ENCODE measurements at regions of chr5 and their contacts with region 1.

Region 1: GRCh38 chr5:174338185-174339010 is 292.9 kb downstream of the NSG2 start:
- DNase-seq: peak; percentile 66

Region 2: GRCh38 chr5:172496671-172497371 is 1841.6 kb before region 1 on chr5:
- CTCF ChIA-PET with region 1: no interaction called
- POLR2A ChIA-PET with region 1: no interaction called
- DNase-seq: no peak

Region 3: DNA sequence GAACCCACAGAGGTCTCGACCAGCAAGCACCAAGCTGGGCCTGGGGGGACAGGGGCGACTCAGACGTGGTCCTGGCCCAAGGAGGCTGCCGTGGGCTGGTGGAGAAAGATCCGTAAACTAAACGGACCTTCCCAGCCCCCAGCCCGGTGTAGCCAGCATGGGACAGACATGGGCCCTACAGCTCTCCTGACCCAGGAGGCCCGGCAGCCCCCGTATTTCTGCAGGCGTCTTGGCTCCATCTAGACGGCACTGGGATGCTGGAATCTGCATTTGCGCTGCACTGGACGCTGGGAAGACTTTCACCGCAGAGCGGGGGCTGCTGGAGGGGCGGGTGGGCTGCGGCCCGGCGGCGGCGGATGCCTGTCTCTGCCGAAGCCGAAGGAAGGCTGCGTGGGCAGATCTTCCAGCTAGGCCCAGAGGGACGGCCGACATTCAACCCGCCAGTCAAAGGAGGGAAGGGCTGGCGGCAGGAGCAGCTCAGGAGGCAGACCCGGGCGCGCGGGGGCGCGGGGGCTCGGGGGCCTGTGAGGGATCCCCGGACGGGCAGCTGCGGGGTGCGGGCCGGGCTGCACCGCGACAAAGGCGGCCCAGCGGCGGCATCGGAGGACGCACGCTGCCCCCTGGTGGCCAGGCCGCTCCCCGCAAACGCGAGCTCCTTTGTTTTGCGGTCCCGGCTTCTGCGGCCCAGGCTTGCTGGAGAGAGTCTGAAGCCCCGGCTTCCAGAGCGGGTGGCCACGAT is 26.7 kb before region 1 on chr5:
- CTCF ChIA-PET with region 1: no interaction called
- POLR2A ChIA-PET with region 1: no interaction called
- DNase-seq: peak; percentile 87

Region 4: GRCh38 chr5:174348311-174348981 is 10.0 kb after region 1 on chr5:
- CTCF ChIA-PET with region 1: interaction called, 3 read pairs
- POLR2A ChIA-PET with region 1: interaction called, 19 read pairs
- DNase-seq: no peak

Region 5: DNA sequence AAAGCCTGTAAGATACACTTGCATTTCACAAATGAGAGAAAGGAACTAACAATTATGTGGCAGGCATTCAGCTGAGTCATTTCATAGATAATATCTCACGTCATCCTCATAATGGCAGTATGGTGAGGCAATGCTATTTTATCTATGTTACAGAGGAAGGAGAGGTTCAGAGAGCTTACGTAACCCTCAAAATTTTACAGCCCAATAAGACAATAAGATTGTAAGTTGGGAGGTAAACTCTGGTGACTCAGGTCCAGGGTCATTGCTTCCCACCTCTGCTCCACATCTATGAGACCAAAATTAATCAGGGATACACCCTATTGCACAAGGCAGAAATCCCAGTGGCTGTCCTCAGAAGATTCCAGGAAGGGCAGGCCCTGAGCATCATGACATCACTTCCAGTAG is 16.8 kb after region 1 on chr5:
- CTCF ChIA-PET with region 1: no interaction called
- POLR2A ChIA-PET with region 1: interaction called, 19 read pairs
- DNase-seq: no peak

Region 6: GRCh38 chr5:174436781-174437201 is 98.4 kb after region 1 on chr5:
- CTCF ChIA-PET with region 1: no interaction called
- POLR2A ChIA-PET with region 1: no interaction called
- DNase-seq: no peak